ENCODE measurements at regions of chr10 and their contacts with region 1.

Region 1: DNA sequence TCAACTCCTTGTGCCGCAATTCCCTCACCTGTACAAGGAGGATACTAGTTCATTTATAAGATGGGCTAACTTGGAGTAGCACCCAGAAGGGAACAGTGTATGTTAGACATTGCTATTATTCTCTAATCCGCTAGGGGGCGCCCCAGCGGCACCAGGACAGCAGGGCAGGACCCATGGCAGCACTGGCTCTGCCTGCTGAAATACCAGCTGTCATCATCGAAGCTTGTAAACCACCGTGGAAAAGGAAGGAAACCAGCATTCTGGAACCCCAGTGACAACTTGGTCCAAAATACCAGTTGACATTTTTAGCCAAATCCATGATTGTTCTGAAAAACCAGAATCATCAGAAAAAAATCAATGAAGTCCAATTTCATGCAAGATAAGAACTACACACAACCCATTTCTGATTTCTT is 134.4 kb downstream of the ITGA8 start:
- DNase-seq: peak; percentile 67
- ATAC-seq: peak; percentile 61 to 88

Region 2: DNA sequence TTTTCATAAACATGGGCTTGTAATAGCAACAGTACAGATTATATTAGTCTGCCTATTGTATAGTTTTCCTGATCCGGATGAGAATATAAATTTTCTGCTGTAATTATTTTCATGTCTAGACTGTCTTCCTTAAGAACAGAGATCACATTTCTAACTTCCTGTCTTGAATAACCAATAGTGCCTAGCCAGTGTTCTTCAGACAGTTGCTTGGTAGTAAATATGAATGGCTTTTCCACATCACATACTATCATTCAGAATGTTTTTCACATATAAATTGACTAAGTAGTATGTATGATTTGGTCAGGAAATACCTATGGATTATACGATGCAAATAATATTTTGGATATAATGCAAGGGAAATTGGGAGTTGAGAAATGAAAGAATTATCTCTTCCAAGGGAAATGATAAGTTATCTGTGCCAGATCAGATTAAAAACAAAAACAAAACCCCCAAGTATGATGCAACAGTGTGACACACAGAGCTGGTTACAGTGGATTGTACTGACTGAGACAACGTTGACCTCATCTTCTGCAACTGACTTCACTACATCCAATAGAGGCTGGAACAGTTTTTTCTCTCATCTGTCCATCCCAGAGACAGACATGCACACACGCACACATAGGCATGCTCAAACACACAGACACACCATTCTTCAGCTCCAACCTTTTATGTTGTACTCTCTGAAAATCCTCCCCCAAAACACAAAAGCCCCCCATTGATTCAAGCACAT is 118.0 kb after region 1 on chr10:
- intact Hi-C with region 1: loop called in 1 of 2 experiments (anchors 10 kb)
- DNase-seq: no peak
- ATAC-seq: no peak

Region 3: DNA sequence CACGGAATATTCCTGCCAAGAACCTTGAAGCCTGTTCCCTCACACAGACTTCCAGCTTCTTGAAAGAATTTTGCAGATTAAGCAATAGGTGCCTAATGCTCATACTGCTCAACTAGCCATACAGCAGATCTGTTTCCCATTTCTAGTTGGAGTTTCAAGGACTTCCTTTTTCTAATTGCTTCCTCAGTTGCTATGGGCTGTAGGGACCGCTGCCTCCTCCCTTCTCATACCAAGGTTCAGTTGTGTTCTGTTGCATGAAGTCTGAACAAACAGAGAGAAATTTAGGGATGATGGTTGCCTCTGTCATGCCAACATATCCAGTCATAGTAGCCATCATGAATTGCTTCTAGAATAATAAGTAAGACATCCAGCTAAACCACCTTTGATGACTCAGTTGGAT is 127.6 kb after region 1 on chr10:
- intact Hi-C with region 1: loop called (anchors 5 to 10 kb)
- DNase-seq: no peak
- ATAC-seq: peak in 1 of 2 donors; percentile 38